GM12878 (cell line): ENCODE measurements at regions of chr4 and their contacts with region 1.

Region 1: GRCh38 chr4:40473578-40474388 is 138.7 kb downstream of the CHRNA9 start:
- DNase-seq: peak; percentile 46
- ATAC-seq: peak; percentile 94
- H3K4me3 ChIP-seq: no peak overlapping the region
- H3K27ac ChIP-seq: no peak overlapping the region
- H3K4me1 ChIP-seq: peaks cover 12% of the 10 kb centered on the region
- H3K27me3 ChIP-seq: no peaks in the 10 kb centered on the region
- CTCF ChIP-seq: no peak
- EP300 ChIP-seq: 0 out of 4 replicates have a peak, but pooled peaks of 1 of the 2 experiments have one; percentile 52
- POLR2A ChIP-seq: no peak
- RAD21 ChIP-seq: no peak

Region 2: DNA sequence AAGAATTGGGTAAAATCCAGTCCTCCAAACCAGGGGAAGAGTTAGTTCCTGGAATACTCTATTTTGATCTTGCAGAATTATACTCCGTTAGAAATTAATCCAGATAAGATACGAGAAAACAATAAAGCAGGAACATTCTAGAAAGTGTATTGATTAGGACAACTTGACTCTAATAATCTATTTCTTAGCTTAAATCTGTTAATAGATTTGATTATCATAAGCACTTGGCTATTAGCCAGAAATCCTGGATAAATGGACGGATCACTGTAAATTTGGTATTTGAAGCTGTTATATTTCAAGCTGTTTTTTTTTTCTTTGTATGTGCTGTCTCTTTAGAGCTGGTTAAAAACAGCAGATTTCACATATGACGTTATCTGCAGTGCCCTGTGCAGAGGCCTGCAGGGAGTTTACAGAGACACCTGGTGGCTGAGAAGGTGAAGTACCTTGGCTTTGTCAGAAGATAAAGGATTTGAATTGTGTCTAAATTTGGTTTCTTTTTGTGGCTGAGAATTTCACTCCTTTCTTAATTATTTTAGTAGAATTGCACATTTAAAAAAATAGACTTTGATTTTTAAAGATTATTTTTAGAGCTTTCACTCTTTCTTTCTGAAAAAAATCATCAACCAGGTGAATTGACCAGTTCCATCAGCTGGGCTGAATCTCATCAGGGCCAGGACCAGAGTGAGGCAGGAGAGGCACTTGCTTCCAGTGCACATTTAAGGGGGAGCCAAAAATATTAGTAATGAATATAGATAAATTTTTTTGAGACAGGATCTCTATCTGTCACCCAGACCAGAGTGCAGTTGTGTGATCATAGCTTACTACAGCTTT is 148.4 kb before region 1 on chr4:
- CTCF ChIA-PET with region 1: interaction called, 5 read pairs
- POLR2A ChIA-PET with region 1: no interaction called
- RAD21 ChIA-PET with region 1: interaction called, 4 read pairs
- SMC1A ChIA-PET with region 1: interaction called, 12 read pairs
- in situ Hi-C with region 1: no loop called
- intact Hi-C with region 1: no loop called
- DNase-seq: no peak
- ATAC-seq: peak; percentile 98
- H3K4me3 ChIP-seq: no peak overlapping the region
- H3K27ac ChIP-seq: no peak overlapping the region
- H3K4me1 ChIP-seq: no peaks in the 10 kb centered on the region
- H3K27me3 ChIP-seq: no peaks in the 10 kb centered on the region
- CTCF ChIP-seq: peak; percentile 86 to 94 (median 89)
- EP300 ChIP-seq: no peak
- POLR2A ChIP-seq: no peak
- RAD21 ChIP-seq: peak; percentile 96

Region 3: GRCh38 chr4:40340030-40340429 is 133.8 kb before region 1 on chr4:
- CTCF ChIA-PET with region 1: no interaction called
- POLR2A ChIA-PET with region 1: no interaction called
- RAD21 ChIA-PET with region 1: no interaction called
- SMC1A ChIA-PET with region 1: no interaction called
- in situ Hi-C with region 1: no loop called
- intact Hi-C with region 1: no loop called
- DNase-seq: no peak
- ATAC-seq: no peak
- H3K4me3 ChIP-seq: no peak overlapping the region
- H3K27ac ChIP-seq: no peak overlapping the region
- H3K4me1 ChIP-seq: no peaks in the 10 kb centered on the region
- H3K27me3 ChIP-seq: 0 out of 4 replicates have a peak, but pooled peaks cover 0 to 3% of the 10 kb centered on the region in 2 experiments
- CTCF ChIP-seq: no peak
- EP300 ChIP-seq: no peak
- POLR2A ChIP-seq: no peak
- RAD21 ChIP-seq: no peak

Region 4: GRCh38 chr4:40455340-40455902 is 18.4 kb before region 1 on chr4:
- CTCF ChIA-PET with region 1: interaction called, 11 read pairs
- POLR2A ChIA-PET with region 1: interaction called, 29 read pairs
- RAD21 ChIA-PET with region 1: interaction called, 10 read pairs
- SMC1A ChIA-PET with region 1: interaction called, 102 read pairs
- in situ Hi-C with region 1: no loop called
- intact Hi-C with region 1: no loop called
- DNase-seq: no peak
- ATAC-seq: no peak
- H3K4me3 ChIP-seq: no peak overlapping the region
- H3K27ac ChIP-seq: no peak overlapping the region
- H3K4me1 ChIP-seq: peaks cover 3% of the 10 kb centered on the region
- H3K27me3 ChIP-seq: no peaks in the 10 kb centered on the region
- CTCF ChIP-seq: no peak
- EP300 ChIP-seq: no peak
- POLR2A ChIP-seq: no peak
- RAD21 ChIP-seq: no peak

Region 5: DNA sequence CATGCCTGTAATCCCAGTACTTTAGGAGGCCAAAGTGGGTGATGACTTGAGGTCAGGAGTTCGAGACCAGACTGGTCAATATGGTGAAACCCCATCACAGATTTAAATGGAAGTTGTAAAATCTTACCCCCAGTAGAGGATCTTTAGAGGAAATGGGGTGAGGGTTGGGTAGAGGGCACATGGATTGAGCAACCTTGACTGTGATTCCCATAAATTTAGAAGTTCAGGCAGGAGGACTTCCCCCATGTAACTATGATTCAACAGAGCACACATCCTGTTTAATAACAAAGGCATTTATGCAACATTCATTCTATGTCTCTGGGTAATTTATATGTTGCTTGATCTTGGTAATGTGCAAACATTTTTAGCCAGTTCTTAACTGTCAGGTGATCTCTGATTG is 12.8 kb after region 1 on chr4:
- CTCF ChIA-PET with region 1: interaction called, 14 read pairs
- POLR2A ChIA-PET with region 1: interaction called, 15 read pairs
- RAD21 ChIA-PET with region 1: interaction called, 28 read pairs
- SMC1A ChIA-PET with region 1: interaction called, 40 read pairs
- in situ Hi-C with region 1: no loop called
- intact Hi-C with region 1: no loop called
- DNase-seq: no peak
- ATAC-seq: no peak
- H3K4me3 ChIP-seq: no peak overlapping the region
- H3K27ac ChIP-seq: no peak overlapping the region
- H3K4me1 ChIP-seq: no peaks in the 10 kb centered on the region; the same call in 1 of the 2 replicates
- H3K27me3 ChIP-seq: no peaks in the 10 kb centered on the region
- CTCF ChIP-seq: no peak
- EP300 ChIP-seq: no peak
- POLR2A ChIP-seq: no peak
- RAD21 ChIP-seq: no peak

Region 6: GRCh38 chr4:40515398-40516293 is 41.9 kb after region 1 on chr4:
- CTCF ChIA-PET with region 1: interaction called, 12 read pairs
- POLR2A ChIA-PET with region 1: interaction called, 17 read pairs
- RAD21 ChIA-PET with region 1: interaction called, 15 read pairs
- SMC1A ChIA-PET with region 1: interaction called, 31 read pairs
- in situ Hi-C with region 1: no loop called
- intact Hi-C with region 1: no loop called
- DNase-seq: peak; percentile 95
- ATAC-seq: peak; percentile 87
- H3K4me3 ChIP-seq: peak overlapping the region; percentile 47; the same call in 1 of the 2 replicates
- H3K27ac ChIP-seq: peak overlapping the region; percentile 88
- H3K4me1 ChIP-seq: peaks cover 35% of the 10 kb centered on the region
- H3K27me3 ChIP-seq: no peaks in the 10 kb centered on the region
- CTCF ChIP-seq: no peak
- EP300 ChIP-seq: peak in 1 of 2 experiments; percentile 55; a peak in 1 of 4 replicates
- POLR2A ChIP-seq: no peak
- RAD21 ChIP-seq: no peak